Panc1 (cell line): ENCODE measurements at regions of chr15 and their contacts with region 1.

Region 1: GRCh38 chr15:83446904-83447709 is at the start of gene SH3GL3:
- DNase-seq: no peak
- ATAC-seq: no peak
- H3K4me3 ChIP-seq: peak within 1 kb of the TSS in 1 of 2 experiments; percentile 4; a peak in 1 of 4 replicates
- H3K27ac ChIP-seq: no peak within 1 kb of the TSS
- H3K4me1 ChIP-seq: no peaks in the 10 kb centered on the region
- H3K27me3 ChIP-seq: no peaks in the 10 kb centered on the region
- CTCF ChIP-seq: no peak
- total RNA-seq, gene SH3GL3: not detected

Region 2: DNA sequence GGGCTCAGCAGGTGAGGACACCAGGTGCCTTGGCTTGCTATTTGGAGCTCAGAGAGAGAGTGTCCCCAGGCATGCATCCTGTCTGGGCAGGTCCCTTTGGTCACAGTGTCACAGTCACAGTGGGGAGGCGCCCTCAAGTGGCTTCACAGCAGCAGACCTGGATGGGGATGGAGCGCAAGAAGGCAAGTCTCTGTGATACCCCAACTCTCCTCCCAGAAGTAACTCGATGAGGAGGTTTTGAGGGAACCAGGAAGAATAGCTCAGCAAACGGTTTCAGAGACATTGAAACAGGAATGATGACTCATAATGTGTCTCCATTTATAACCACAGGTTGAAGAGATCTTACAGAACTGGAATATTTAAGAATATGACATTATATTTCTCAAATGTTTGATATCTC is 66.4 kb before region 1 on chr15:
- CTCF ChIA-PET with region 1: no interaction called
- POLR2A ChIA-PET with region 1: no interaction called
- in situ Hi-C with region 1: no loop called
- intact Hi-C with region 1: no loop called
- DNase-seq: peak; percentile 8
- ATAC-seq: peak; percentile 91
- H3K4me3 ChIP-seq: no peak overlapping the region
- H3K27ac ChIP-seq: no peak overlapping the region
- H3K4me1 ChIP-seq: no peaks in the 10 kb centered on the region
- H3K27me3 ChIP-seq: no peaks in the 10 kb centered on the region; the same call in 1 of the 2 replicates
- CTCF ChIP-seq: peak; percentile 81

Region 3: DNA sequence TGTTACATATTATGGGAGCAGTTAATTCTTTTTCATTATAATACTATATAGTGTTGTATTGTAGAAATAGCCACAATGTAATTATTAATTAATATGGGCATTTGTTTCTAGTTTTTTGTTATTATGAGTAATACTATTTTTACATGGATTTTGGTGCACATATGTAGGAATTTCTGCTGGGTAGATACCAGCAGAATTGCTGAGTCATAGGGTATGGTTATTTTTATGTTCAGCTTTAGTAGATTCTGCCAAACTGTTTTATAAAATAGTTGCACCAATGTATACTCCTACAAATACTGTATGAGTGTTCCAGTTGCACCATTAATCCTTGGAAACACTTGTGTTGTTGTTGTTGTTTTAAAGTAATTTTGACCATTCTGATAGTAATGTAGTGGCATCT is 91.6 kb after region 1 on chr15:
- CTCF ChIA-PET with region 1: interaction called, 10 read pairs
- POLR2A ChIA-PET with region 1: no interaction called
- in situ Hi-C with region 1: no loop called
- intact Hi-C with region 1: no loop called
- DNase-seq: no peak
- ATAC-seq: no peak
- H3K4me3 ChIP-seq: no peak overlapping the region
- H3K27ac ChIP-seq: no peak overlapping the region
- H3K4me1 ChIP-seq: no peaks in the 10 kb centered on the region
- H3K27me3 ChIP-seq: no peaks in the 10 kb centered on the region
- CTCF ChIP-seq: no peak

Region 4: GRCh38 chr15:83698294-83698693 is 251.2 kb after region 1 on chr15:
- CTCF ChIA-PET with region 1: no interaction called
- POLR2A ChIA-PET with region 1: no interaction called
- in situ Hi-C with region 1: no loop called
- intact Hi-C with region 1: no loop called
- DNase-seq: no peak
- ATAC-seq: no peak
- H3K4me3 ChIP-seq: no peak overlapping the region
- H3K27ac ChIP-seq: no peak overlapping the region
- H3K4me1 ChIP-seq: no peaks in the 10 kb centered on the region
- H3K27me3 ChIP-seq: no peaks in the 10 kb centered on the region
- CTCF ChIP-seq: no peak